ENCODE measurements at regions of chr3 and their contacts with region 1.

Region 1: DNA sequence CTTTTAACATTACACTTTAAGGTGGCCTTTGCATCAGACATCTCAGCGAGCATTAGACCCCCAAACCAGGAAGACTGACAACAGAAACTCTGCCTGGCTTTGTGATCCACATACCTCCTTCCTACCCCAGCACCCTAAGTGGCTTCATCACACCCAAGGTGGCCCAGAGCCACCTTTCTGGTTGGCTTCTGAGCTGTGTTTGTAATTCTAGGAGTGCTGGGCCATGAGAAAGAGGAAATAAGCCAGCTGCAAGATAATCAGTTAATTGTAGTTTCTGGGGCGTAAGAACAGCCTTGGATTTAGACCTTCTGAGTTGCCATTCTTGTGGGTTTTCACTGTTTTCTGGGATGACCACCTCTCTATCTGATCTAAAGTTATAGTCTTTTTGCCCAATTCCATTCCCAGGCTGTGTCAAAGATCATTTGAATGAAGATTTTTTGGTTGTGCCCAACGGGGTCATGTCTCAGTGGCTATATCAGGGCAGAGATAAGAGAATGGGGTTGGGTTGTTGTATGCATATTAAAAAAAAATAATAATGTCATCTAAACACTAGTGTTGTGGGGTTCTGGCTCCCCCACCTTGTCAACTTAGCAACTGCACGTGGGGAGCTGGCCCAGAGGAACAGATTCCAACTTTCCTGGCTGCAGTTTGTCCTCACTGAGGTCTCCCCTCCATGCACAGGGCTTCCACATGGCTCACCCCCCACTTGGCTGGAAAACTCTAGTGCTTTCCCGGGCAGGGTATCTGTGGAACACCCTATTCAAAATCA is 234.8 kb upstream of the WNT5A start:
- DNase-seq: peak; percentile 33
- H3K4me3 ChIP-seq: no peak overlapping the region
- H3K27ac ChIP-seq: no peak overlapping the region
- H3K27me3 ChIP-seq: no peaks in the 10 kb centered on the region
- CTCF ChIP-seq: peak; percentile 82

Region 2: GRCh38 chr3:55160241-55160983 is 561.5 kb before region 1 on chr3:
- in situ Hi-C with region 1: loop called (anchors 25 kb)
- DNase-seq: peak; percentile 99
- H3K4me3 ChIP-seq: no peak overlapping the region
- H3K27ac ChIP-seq: peak overlapping the region; percentile 94
- H3K27me3 ChIP-seq: no peaks in the 10 kb centered on the region
- CTCF ChIP-seq: no peak

Region 3: GRCh38 chr3:55376753-55377347 is 345.1 kb before region 1 on chr3:
- in situ Hi-C with region 1: no loop called
- DNase-seq: no peak
- H3K4me3 ChIP-seq: no peak overlapping the region
- H3K27ac ChIP-seq: no peak overlapping the region
- H3K27me3 ChIP-seq: no peaks in the 10 kb centered on the region
- CTCF ChIP-seq: no peak